Right ventricle myocardium inferior (tissue), 1 donor: ENCODE measurements at regions of chr4 and their contacts with region 1.

Region 1: DNA sequence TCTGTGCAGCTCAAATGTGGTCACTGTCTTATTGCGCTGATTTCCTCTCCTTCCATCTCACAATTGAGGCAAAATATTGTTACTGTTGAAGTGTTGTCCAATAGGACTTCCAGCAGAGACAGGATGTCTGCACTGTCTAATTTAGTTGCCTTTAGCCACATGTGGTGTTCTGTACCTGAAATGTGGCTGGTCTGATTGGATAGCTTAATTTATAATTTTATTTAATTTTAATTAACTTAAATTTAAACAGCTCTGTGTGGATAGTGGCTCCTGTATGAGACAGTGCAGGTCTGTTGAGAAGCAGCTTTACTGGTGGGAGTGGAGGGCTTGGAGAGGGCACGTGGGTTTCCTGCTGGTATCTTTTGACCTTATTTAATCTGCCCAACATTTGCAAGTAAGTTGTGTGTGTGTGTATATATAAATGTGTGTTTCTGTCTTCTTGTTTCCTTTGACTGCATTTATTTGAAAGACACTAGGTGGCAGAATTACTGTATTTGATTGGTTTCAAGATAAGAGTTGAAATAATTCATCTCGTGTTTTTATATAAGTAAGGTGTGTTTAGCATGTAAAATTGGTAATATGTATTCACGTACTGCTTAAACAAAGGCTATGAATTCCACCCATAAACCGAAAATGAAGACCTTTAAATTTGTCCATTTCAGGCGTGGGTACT is 55.3 kb upstream of the MSANTD1 start:
- DNase-seq: no peak
- ATAC-seq: no peak

Region 2: GRCh38 chr4:3292571-3293400 is 99.1 kb after region 1 on chr4 and contains the start of gene RGS12:
- intact Hi-C with region 1: no loop called
- DNase-seq: peak; percentile 96
- ATAC-seq: peak; percentile 97
- total RNA-seq, gene RGS12: 21.0 TPM

Region 3: DNA sequence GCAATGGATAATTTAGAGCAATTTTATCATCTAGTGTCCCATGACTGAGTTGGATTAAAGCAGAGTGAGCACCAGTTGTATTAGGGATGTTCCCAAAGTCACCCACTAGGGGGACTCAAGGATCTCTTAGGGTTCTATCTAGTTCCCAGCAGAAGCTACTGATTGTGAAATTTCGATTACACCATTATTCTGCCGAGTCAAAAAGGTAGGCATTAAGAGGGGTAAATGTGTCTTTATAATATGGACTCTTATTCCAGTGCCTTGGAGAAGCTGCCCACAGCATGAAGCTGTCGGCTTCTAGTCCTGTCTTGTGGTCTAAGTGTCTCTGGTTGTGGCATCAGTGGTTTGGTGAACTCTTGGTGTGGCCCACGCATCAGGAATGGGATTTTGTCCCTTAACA is 152.5 kb after region 1 on chr4:
- intact Hi-C with region 1: loop called (anchors 10 kb)
- DNase-seq: no peak
- ATAC-seq: peak; percentile 95

Region 4: GRCh38 chr4:3449574-3450534 is 256.2 kb after region 1 on chr4:
- intact Hi-C with region 1: loop called (anchors 5 kb)
- DNase-seq: peak; percentile 63
- ATAC-seq: no peak